GM10248 (cell line): ENCODE measurements at regions of chr19 and their contacts with region 1.

Region 1: DNA sequence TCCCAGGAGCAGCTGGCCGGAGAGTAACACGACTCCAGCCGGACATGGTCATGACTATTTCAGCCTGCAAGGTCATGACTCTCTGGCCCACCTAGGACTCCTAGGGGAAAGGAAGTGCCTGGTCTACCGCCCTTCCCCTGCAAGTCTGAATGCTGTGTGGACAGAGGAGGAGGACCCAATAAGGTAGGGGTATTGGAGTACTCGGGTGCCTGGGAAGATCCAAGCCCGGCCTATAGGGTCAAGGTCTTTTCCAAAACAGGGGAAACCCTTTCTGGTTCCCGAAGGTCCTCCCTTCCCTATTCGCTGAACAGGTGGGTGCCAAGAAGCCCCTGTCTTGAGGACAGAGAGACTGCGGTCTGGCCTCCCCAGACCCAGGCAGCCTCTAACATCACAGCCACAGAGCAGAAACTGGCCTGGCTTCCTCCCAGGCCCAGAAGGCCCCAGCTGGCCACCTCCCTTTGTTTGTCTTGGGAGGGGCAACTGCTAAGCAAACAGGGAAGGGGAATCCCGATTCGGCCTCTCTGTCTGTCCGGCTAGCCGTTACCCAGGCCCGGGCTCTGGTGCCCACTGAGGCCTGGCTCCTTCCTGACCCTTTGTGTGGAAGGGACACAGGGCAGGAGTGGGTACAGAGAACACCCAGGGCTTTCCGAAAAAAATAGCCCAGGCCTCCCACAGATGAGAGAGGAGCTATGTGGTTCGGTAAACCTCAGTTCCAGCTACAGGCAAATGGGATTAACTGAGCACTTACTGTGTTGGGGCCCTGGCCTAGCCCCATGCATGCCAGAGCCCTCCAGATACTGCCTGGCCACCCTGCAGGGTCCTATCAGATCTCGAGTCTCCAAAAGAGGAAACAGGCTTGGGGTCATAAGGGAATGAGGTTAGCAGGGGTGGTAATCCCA is 5.2 kb upstream of the GRAMD1A start:
- DNase-seq: no peak
- CTCF ChIP-seq: no peak

Region 2: DNA sequence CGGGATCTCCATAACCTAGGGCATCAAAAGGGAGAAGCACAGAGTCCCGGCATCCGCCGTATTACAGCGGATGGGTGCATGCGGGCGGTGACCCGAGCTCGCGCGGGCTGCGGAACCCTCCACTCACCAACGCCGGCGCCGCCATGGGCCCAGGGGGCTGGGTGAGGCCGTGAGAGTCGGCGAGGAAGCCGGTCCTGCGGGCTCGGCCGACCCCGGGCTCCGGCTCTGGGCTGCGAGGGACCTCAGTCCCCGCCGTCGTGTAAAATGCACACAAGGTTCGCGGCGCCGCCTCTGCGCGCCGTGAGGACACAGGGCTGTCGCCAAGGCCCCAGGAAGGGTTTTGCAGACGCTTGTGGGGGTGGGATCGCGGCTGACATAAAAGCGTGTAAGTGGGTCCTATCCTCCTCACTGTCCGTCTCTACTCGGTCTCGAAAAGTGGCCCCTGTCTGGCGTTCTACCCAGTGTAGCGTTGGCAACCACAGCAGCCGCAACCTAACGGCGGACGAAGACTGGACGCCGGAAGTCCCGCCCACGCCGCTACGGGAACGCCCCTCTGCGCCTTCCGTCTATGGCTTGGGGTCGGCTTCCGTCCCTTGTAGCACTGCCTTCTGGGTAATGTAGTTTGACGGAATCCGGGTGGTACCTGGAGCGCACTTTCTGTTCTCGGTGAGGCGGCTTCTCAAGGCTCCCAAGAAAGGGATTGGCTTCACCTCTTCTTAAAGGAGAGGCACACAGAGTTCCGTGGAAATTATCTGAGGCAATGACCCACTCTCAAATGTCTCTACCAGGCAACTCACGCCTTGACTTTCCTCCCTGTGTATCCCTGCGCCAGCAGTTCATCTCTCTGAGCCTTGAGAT is 222.0 kb before region 1 on chr19 and contains the start of gene ZNF599:
- CTCF ChIA-PET with region 1: no interaction called
- POLR2A ChIA-PET with region 1: no interaction called
- DNase-seq: peak; percentile 91
- CTCF ChIP-seq: no peak

Region 3: DNA sequence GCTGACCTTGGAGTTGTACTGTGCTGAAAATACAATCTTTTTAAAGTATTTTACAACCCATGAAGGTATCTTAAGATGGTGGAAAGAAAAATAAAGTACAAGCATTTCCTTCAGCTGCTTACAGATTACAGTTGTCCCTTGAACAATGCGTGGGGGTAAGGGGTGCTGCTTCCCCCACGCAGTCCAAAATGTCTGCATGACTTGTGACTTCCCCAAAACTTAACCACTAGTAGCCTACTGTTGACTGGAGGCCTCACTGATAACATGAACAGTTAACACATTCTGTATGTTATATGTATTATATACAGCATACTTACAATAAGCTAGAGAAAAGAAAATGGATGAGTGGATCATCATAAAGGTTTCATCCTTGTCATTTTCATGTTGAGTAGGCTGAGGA is 176.6 kb before region 1 on chr19:
- CTCF ChIA-PET with region 1: no interaction called
- POLR2A ChIA-PET with region 1: no interaction called
- DNase-seq: no peak
- CTCF ChIP-seq: no peak

Region 4: GRCh38 chr19:34926685-34927375 is 68.1 kb before region 1 on chr19 and contains the start of gene ZNF30:
- CTCF ChIA-PET with region 1: no interaction called
- POLR2A ChIA-PET with region 1: no interaction called
- DNase-seq: peak; percentile 95
- CTCF ChIP-seq: no peak

Region 5: GRCh38 chr19:35019144-35019543 is 24.3 kb after region 1 on chr19:
- CTCF ChIA-PET with region 1: no interaction called
- POLR2A ChIA-PET with region 1: no interaction called
- DNase-seq: no peak
- CTCF ChIP-seq: no peak

Region 6: DNA sequence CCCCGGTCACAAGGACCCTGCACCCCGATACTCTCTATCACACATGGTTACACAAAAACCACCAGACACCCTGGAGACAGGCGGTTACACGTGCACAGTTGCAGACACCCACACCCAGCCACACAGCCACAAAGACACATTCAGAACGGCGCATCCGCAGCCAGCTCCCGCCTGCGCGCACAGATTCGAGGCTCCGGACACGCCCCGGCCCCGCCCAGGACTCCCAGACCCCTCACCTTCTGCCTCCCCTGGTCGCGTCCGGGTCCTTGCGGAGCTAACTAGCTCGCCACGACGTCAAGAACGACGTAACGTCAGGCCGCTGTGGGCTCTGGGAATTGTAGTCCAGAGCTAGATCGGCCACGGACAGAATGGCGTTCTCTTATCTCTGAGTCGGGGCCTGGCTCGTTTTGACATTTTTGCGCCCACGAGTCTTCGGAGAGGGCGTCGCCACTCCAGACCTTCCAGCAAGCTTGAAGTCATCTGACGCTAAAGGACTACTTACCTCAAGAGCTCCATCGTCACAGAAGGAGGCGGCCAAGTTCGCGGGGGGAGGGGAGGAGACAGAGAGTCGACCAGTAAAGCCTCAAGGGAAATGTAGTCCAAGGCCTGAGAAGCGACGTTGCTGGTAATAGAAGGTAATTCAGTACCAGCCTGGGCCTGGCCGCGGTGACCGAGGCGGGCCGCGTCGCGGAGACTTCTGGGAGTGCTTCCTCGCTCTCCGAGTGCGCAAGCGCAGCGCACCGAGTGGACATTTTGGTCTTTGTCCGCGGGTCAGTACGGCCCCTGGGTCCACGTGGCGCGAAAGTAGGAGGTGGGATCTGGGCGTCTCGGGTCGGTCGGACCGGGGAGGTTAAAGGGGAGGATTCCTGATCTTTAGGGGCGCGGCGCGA is 1219.7 kb after region 1 on chr19 and contains the starts of genes ZNF146 and ZNF565:
- CTCF ChIA-PET with region 1: no interaction called
- POLR2A ChIA-PET with region 1: interaction called, 10 read pairs
- DNase-seq: peak; percentile 95
- CTCF ChIP-seq: no peak